Naive thymus-derived CD4-positive, alpha-beta T cell (primary cell): ENCODE measurements at regions of chr17 and their contacts with region 1.

Region 1: GRCh38 chr17:77382966-77383612 is 242.3 kb downstream of the SEC14L1 start:
- DNase-seq: no peak
- ATAC-seq: no peak
- H3K4me3 ChIP-seq: peak overlapping the region; percentile 17
- H3K4me3 Mint-ChIP-seq: peak overlapping the region; percentile 60 to 90 (median 86)
- H3K27ac ChIP-seq: peak overlapping the region; percentile 58
- H3K27ac Mint-ChIP-seq: peak overlapping the region; percentile 76 to 94 (median 93)
- H3K4me1 ChIP-seq: peaks cover 73 to 83% of the 10 kb centered on the region in 2 donors
- H3K4me1 Mint-ChIP-seq: peaks cover 59 to 94% (median 89%) of the 10 kb centered on the region in 7 donors
- H3K27me3 ChIP-seq: no peaks in the 10 kb centered on the region
- H3K27me3 Mint-ChIP-seq: no peaks in the 10 kb centered on the region

Region 2: GRCh38 chr17:77420804-77421629 is 37.9 kb after region 1 on chr17:
- CTCF ChIA-PET with region 1: interaction called, 14 read pairs
- POLR2A ChIA-PET with region 1: interaction called, 3,353 read pairs
- intact Hi-C with region 1: loop called in 1 of 2 experiments (anchors 2 kb)
- DNase-seq: peak in 7 of 9 donors; percentile 50 to 65 (median 58)
- ATAC-seq: peak; percentile 56
- H3K4me3 ChIP-seq: peak overlapping the region; percentile 53
- H3K4me3 Mint-ChIP-seq: peak overlapping the region; percentile 79 to 88 (median 85)
- H3K27ac ChIP-seq: peak overlapping the region; percentile 53
- H3K27ac Mint-ChIP-seq: peak overlapping the region; percentile 82 to 97 (median 94)
- H3K4me1 ChIP-seq: peaks cover 44 to 57% of the 10 kb centered on the region in 2 donors
- H3K4me1 Mint-ChIP-seq: peaks cover 22 to 73% (median 60%) of the 10 kb centered on the region in 7 donors
- H3K27me3 ChIP-seq: no peaks in the 10 kb centered on the region
- H3K27me3 Mint-ChIP-seq: no peaks in the 10 kb centered on the region